ENCODE measurements at regions of chr10 and their contacts with region 1.

Region 1: GRCh38 chr10:33509231-33509831 is 174.9 kb upstream of the NRP1 start:
- DNase-seq: peak; percentile 60
- H3K4me3 Mint-ChIP-seq: no peak overlapping the region
- H3K27ac Mint-ChIP-seq: no peak overlapping the region
- H3K4me1 Mint-ChIP-seq: peaks cover 13% of the 10 kb centered on the region
- H3K27me3 Mint-ChIP-seq: peaks cover 18% of the 10 kb centered on the region

Region 2: DNA sequence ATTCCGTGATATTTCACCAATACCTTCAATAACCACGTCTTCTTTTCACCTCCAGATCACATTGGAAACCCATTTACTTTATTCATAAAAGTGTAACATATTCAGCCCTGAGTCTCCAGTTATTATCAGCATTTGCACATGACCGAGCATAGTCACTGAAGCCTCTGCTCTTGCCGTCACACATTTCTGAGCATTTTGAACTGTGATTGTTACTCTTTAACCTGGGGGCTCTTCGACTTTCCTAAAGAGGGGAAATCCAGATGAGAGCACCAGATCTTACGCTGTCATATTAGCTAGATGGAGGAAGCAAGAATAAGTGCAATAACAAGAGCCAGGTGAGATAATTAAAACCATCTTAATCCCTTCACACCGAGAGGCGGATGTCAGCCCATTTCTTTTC is 85.1 kb after region 1 on chr10:
- CTCF ChIA-PET with region 1: no interaction called
- POLR2A ChIA-PET with region 1: no interaction called
- intact Hi-C with region 1: no loop called
- DNase-seq: no peak
- H3K4me3 Mint-ChIP-seq: no peak overlapping the region
- H3K27ac Mint-ChIP-seq: no peak overlapping the region
- H3K4me1 Mint-ChIP-seq: no peaks in the 10 kb centered on the region
- H3K27me3 Mint-ChIP-seq: peaks cover 14% of the 10 kb centered on the region

Region 3: DNA sequence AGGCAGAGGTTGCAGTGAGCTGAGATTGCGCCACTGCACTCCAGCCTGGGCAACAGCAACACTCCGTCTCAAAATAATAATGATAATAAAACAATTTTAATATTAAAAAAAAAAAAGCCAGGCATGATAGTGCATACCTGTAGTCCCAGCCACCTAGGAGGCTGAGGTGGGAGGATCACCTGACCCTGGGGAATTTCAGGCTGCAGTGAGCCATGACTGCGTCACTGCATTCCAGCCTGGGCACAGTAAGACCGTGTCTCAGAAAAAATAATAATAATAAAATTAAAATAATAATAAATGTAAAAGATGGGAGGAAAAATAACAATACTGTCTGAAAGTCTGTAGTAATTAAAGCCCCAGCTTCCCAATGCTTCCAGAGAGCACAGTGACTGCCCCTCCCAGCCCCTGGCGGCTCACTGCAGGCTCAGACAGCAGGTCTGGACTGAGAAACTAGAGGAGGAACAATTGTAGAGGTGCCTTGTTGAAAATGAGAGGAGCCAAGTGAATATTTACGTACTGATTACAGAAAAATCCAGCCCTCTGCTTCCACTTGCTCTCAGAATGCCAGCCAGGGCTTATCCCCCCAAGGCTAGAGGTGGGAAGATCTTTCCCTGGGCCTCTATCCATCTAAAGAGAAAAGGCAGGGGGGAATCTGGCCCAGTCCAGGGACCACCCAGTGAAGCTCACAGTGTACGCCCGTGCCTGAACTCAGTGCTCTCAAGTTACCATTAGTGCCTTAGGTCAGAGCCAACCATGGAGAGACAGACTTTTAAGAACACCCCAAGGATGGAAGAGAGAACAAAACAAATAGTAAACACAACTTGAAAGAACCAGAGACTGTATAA is 1193.0 kb after region 1 on chr10:
- CTCF ChIA-PET with region 1: no interaction called
- POLR2A ChIA-PET with region 1: no interaction called
- intact Hi-C with region 1: loop called (anchors 10 kb)
- DNase-seq: no peak
- H3K4me3 Mint-ChIP-seq: no peak overlapping the region
- H3K27ac Mint-ChIP-seq: no peak overlapping the region
- H3K4me1 Mint-ChIP-seq: peaks cover 5% of the 10 kb centered on the region
- H3K27me3 Mint-ChIP-seq: peaks cover 4% of the 10 kb centered on the region

Measured in activated CD4-positive, alpha-beta memory T cell treated with anti-CD3 and anti-CD28 coated beads for 36 hours (primary cell).